Gastrocnemius medialis (tissue), 4 donors: ENCODE measurements at regions of chrX and their contacts with region 1.

Region 1: GRCh38 chrX:43654431-43655150 is 1.5 kb upstream of the MAOA start:
- DNase-seq: peak; percentile 77 to 94
- ATAC-seq: peak; percentile 80 to 89
- H3K4me3 ChIP-seq: peak overlapping the region; percentile 67 to 77 (median 72)
- H3K27ac ChIP-seq: peak overlapping the region; percentile 76 to 96 (median 88)
- H3K4me1 ChIP-seq: no peaks in the 10 kb centered on the region
- H3K27me3 ChIP-seq: no peaks in the 10 kb centered on the region
- CTCF ChIP-seq: peak in 3 of 5 experiments; percentile 23 to 34 (median 30)
- POLR2A ChIP-seq: peak; percentile 71 to 92

Region 2: DNA sequence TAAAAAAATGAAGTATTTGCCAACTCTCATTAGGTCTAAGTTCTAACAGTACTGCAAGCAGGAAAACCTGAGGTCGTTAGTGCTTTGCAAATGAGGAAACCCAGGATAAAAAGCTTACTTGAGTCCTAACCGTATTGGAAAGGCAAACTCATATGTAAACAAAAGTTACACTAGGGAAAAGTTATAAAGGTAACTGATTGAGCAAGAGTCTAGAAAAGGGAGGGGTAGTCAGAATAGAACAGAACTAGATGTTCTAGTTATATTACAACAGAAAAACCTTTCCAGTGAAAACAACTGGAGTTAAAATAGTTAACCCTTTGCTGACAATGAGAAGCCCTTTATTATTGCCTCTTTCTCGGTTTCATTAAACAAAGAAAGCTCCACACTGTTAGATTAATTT is 64.9 kb before region 1 on chrX:
- in situ Hi-C with region 1: no loop called
- intact Hi-C with region 1: loop called (anchors 5 kb)
- DNase-seq: no peak
- ATAC-seq: peak; percentile 86 to 96
- H3K4me3 ChIP-seq: peak overlapping the region in 1 of 4 donors; percentile 40
- H3K27ac ChIP-seq: peak overlapping the region; percentile 50 to 84 (median 70)
- H3K4me1 ChIP-seq: peaks cover 0 to 5% of the 10 kb centered on the region in 2 donors
- H3K27me3 ChIP-seq: no peaks in the 10 kb centered on the region
- CTCF ChIP-seq: no peak
- POLR2A ChIP-seq: peak in 1 of 2 donors; percentile 34

Region 3: DNA sequence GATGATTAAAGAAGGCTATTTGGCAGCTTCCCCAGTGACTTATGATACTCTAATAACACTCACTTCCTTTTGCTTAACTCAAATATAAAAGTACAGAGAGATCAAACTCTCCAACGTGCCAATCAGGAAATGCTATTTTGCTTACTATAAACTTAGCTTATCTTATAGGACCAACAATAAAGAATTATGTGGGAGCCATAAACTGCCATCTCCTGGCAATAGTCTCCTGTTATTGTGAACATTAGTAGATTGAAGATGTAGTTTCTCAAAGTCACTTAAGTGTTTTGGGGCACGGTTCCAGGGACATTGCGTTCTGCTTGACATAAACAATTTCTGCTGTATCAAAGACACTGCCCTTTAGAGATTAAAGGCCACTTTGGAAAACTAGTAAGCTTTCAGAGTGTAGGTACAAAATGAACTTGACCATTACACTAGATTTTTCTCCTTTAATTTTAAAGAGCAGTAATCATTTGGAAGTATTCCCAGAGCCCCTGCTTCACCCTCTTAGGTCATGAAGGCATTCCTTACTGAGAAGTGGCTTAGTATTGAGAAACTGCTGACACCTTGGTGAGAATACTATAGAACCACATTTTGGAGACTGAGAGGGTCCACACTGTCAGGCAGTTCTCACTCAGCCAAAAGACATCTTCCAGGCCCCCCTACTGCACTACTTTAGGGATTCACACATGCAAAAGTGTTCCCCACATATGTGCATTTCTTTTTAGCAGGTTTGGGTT is 53.4 kb after region 1 on chrX:
- in situ Hi-C with region 1: no loop called
- intact Hi-C with region 1: loop called (anchors 2 kb)
- DNase-seq: peak; percentile 53 to 68
- ATAC-seq: peak; percentile 80 to 89
- H3K4me3 ChIP-seq: no peak overlapping the region
- H3K27ac ChIP-seq: peak overlapping the region; percentile 62 to 80 (median 74)
- H3K4me1 ChIP-seq: peaks cover 10 to 11% of the 10 kb centered on the region in 2 donors
- H3K27me3 ChIP-seq: peaks cover 0 to 3% (median 0%) of the 10 kb centered on the region in 3 donors
- CTCF ChIP-seq: no peak
- POLR2A ChIP-seq: no peak

Region 4: GRCh38 chrX:43805579-43805978 is 151.0 kb after region 1 on chrX:
- in situ Hi-C with region 1: no loop called
- intact Hi-C with region 1: no loop called
- DNase-seq: no peak
- ATAC-seq: no peak
- H3K4me3 ChIP-seq: no peak overlapping the region
- H3K27ac ChIP-seq: peak overlapping the region in 2 of 4 donors; percentile 42 to 55
- H3K4me1 ChIP-seq: peaks cover 10 to 12% of the 10 kb centered on the region in 2 donors
- H3K27me3 ChIP-seq: no peaks in the 10 kb centered on the region
- CTCF ChIP-seq: no peak
- POLR2A ChIP-seq: no peak

Region 5: DNA sequence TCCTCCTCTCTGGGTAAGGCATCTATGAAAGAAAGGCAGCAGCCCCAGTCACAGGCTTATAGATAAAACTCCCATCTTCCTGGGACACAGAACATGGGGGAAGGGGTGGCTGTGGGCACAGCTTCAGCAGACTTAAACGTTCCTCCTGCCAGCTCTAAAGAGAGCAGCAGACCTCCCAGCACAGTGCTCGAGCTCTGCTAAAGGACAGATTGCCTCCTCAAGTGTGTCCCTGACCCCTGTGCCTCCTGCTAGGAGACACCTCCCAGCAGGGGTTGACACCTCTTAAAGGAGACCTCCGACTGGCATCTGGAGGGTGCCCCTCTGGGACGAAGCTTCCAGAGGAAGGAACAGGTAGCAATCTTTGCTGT is 599.0 kb after region 1 on chrX:
- in situ Hi-C with region 1: no loop called
- intact Hi-C with region 1: no loop called
- DNase-seq: no peak
- ATAC-seq: no peak
- H3K4me3 ChIP-seq: no peak overlapping the region
- H3K27ac ChIP-seq: no peak overlapping the region
- H3K4me1 ChIP-seq: no peaks in the 10 kb centered on the region
- H3K27me3 ChIP-seq: peaks cover 0 to 3% (median 0%) of the 10 kb centered on the region in 3 donors
- CTCF ChIP-seq: no peak
- POLR2A ChIP-seq: no peak